ENCODE measurements at regions of chr5 and their contacts with region 1.

Region 1: DNA sequence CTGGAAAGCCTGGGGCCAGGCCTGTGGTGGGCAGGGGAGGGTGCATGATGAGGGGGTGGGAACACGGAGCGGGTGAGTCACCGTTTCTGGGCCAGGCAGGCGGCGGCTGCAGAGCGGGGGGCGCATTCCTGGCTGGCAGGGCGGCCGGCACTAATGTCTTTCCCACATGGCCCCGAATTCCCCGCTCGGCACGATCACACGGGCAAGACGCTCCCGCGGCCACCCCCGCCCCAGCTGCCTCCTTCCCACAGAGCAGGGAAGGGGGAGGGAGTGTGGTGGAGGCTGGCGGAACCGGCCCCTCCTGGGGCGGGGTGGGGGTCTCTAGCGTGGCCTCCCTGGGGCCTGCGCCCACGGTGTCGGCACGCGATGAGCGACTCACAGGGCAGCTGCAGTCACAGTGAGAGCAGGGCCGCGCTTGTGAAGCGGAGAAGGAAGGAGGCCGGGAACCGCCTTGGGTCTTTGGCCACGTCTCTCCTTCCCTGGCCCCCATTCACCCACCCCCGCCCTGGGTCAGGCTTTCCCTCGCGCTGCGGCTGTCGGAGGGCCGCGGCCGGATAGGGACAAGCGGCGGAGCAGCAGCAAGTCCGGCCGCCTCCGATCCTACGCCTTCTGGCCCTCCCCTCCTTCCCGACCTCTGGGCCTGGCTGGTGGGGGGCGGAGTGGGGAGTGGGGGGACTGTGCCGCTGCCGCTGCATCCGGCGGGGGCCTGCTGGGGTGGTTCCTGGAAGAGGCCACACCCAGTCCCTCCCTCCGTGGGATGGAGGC is 48.9 kb downstream of the CXXC5 start:
- DNase-seq: peak; percentile 35
- ATAC-seq: peak; percentile 70
- H3K4me3 ChIP-seq: peak overlapping the region; percentile 66
- H3K27ac ChIP-seq: no peak overlapping the region
- H3K4me1 ChIP-seq: peaks cover 13% of the 10 kb centered on the region
- H3K27me3 ChIP-seq: no peaks in the 10 kb centered on the region
- CTCF ChIP-seq: no peak

Region 2: GRCh38 chr5:139273572-139274289 is 423.3 kb before region 1 on chr5:
- CTCF ChIA-PET with region 1: no interaction called
- POLR2A ChIA-PET with region 1: no interaction called
- intact Hi-C with region 1: no loop called
- DNase-seq: peak; percentile 90
- ATAC-seq: peak; percentile 76
- H3K4me3 ChIP-seq: peak overlapping the region; percentile 100
- H3K27ac ChIP-seq: peak overlapping the region; percentile 87
- H3K4me1 ChIP-seq: peaks cover 52% of the 10 kb centered on the region
- H3K27me3 ChIP-seq: no peaks in the 10 kb centered on the region
- CTCF ChIP-seq: no peak

Region 3: DNA sequence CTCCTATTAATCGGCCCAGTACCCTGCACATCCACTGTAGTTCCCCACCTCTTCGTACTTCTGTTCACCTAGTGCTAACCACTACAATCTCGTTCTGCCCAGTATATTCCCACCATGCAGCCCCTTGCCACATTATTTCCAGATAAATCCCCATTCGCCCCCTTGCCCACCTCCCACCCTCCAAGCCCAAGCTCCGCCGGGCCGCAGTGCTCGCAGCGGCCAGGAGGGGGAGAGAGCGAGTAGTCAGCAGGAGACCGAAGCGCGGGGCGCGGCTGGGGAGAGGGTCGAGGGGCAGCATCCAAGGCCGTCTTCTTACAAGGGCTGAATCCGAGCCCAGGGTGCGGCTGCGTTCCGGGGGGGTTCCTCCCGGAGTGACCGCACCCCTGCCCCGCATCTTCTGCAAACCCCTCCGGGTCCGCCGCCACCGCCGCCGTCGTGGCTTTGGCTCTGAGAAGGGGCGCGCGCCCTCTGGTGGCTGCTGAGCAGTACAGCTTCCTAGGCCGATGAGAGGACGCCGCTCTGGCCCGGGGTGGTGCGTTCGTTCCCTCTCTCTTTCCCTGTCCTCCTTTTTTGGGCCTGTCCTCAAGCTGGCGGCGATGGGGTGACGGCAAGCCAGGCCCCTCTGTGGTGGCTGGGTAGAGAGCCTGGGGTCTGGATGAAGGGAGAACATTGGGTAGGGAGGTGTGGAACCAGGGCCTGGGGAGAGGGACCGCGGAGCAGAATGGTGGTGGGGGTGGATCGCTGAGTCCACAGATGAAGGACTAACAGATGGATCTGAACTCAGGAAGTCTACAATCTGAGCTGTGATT is 68.5 kb after region 1 on chr5:
- CTCF ChIA-PET with region 1: no interaction called
- POLR2A ChIA-PET with region 1: no interaction called
- intact Hi-C with region 1: loop called (anchors 5 kb)
- DNase-seq: peak; percentile 66
- ATAC-seq: peak; percentile 93
- H3K4me3 ChIP-seq: peak overlapping the region; percentile 76
- H3K27ac ChIP-seq: no peak overlapping the region
- H3K4me1 ChIP-seq: no peaks in the 10 kb centered on the region
- H3K27me3 ChIP-seq: no peaks in the 10 kb centered on the region
- CTCF ChIP-seq: peak; percentile 93

Region 4: GRCh38 chr5:139925650-139926640 is 228.9 kb after region 1 on chr5:
- CTCF ChIA-PET with region 1: no interaction called
- POLR2A ChIA-PET with region 1: no interaction called
- intact Hi-C with region 1: no loop called
- DNase-seq: no peak
- ATAC-seq: peak; percentile 31; the same call in 1 of the 2 replicates
- H3K4me3 ChIP-seq: no peak overlapping the region
- H3K27ac ChIP-seq: no peak overlapping the region
- H3K4me1 ChIP-seq: no peaks in the 10 kb centered on the region
- H3K27me3 ChIP-seq: no peaks in the 10 kb centered on the region
- CTCF ChIP-seq: no peak

Measured in PC-3 (cell line).